Naive thymus-derived CD8-positive, alpha-beta T cell (primary cell): ENCODE measurements at regions of chr6 and their contacts with region 1.

Region 1: DNA sequence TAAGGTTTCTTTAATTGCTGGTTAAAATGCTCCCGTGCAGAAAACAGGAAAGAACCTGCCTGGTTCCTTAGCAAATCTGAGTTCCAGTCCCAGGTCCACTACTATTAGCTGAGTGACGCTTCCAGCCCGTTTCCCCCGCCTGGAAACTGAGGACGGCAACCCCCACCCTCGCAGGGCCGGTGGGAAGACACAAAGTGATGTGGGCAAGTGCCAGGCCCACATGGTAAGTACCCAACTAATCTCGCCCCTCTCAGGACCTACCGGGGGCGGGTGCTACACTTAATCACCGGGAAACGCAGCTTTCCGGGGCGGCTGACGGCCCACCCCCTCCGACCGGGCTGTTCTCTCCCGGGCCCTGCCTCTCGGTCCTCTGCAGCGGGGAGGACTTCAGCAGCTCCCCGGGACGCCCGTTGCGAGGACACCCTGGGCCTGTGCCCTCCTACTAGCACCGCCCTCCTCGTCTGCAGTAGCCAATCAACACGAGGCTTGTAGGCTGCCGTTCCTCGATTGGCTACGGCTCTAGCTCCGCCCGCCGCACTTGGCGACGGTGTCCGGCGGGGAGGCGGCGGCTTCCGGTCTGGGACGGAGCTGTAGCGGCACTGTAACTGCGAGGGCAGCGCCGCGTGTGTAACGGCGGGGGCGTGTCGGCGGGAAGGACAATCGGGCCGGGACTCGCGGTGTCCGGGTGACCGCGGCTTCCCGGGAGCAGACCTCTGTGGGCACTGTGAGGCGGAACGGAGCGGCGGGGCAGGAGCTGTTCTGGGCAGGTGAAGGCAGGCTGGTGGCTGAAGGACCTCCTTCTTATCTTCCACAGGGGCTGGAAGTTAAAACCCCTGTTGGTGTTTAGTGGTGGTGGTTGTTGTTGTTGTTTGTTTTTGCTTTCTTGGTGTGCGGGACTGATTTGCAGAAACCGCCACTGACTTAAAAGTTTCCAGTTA is at the start of gene ZBTB9:
- DNase-seq: peak; percentile 87 to 96 (median 92)
- ATAC-seq: peak; percentile 97 to 99
- H3K4me3 Mint-ChIP-seq: peak within 1 kb of the TSS; percentile 91 to 100 (median 94)
- H3K27ac Mint-ChIP-seq: peak within 1 kb of the TSS; percentile 63 to 99 (median 96)
- H3K4me1 Mint-ChIP-seq: peaks cover 31 to 69% (median 43%) of the 10 kb centered on the region in 4 donors
- H3K27me3 Mint-ChIP-seq: no peaks in the 10 kb centered on the region
- polyA plus RNA-seq, gene ZBTB9: 3.7 to 10.4 (median 6.4) TPM

Region 2: DNA sequence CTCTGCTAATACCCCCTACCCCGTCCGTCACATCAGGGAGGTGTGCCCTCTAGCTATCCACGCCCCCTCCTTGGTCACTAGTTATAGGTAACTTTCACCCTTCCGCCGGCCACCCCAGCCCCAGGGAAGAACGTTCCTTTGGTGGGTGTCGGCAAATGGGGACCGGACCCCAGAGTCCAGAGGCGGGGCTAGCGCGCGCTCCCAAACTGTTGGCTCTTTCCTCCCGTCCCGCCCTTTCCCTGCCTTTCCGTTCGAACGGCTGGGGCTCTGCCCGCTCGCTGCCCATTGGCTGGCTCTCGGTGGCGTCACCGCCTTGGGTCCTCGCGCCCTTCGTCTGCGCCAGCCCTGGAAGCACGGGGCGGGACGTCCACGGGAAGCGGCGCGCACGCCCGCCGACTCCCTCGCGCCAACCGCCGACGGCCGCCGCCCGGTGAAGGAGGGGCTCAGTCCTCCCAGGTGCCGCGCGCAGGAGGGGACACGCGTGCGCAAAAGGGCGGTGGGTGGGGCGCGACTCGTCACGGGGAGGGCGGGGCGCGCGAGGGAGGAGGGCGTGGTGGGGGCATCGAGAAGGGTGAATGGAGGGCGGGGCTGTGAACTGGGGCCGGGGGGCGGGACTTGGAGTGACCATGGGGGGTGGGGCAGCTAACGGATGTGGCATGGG is 44.1 kb before region 1 on chr6:
- POLR2A ChIA-PET with region 1: interaction called, 10 read pairs
- DNase-seq: peak; percentile 94 to 99 (median 96)
- ATAC-seq: peak; percentile 72 to 83
- H3K4me3 Mint-ChIP-seq: peak overlapping the region; percentile 74 to 96 (median 90)
- H3K27ac Mint-ChIP-seq: peak overlapping the region; percentile 63 to 99 (median 98)
- H3K4me1 Mint-ChIP-seq: peaks cover 20 to 53% (median 44%) of the 10 kb centered on the region in 4 donors
- H3K27me3 Mint-ChIP-seq: no peaks in the 10 kb centered on the region

Region 3: GRCh38 chr6:33417903-33418689 is 36.2 kb before region 1 on chr6 and contains the start of gene CUTA:
- POLR2A ChIA-PET with region 1: interaction called, 21 read pairs
- DNase-seq: peak; percentile 93 to 100 (median 99)
- ATAC-seq: peak; percentile 90
- H3K4me3 Mint-ChIP-seq: peak within 1 kb of the TSS; percentile 90 to 95 (median 92)
- H3K27ac Mint-ChIP-seq: peak within 1 kb of the TSS; percentile 98 to 100 (median 99)
- H3K4me1 Mint-ChIP-seq: peaks cover 49 to 94% (median 80%) of the 10 kb centered on the region in 4 donors
- H3K27me3 Mint-ChIP-seq: no peaks in the 10 kb centered on the region
- polyA plus RNA-seq, gene CUTA: 338 to 441 (median 385) TPM

Region 4: GRCh38 chr6:33425668-33426577 is 28.4 kb before region 1 on chr6:
- POLR2A ChIA-PET with region 1: interaction called, 52 read pairs
- DNase-seq: peak; percentile 70 to 94 (median 80)
- ATAC-seq: peak; percentile 54 to 57
- H3K4me3 Mint-ChIP-seq: peak overlapping the region; percentile 87 to 97 (median 91)
- H3K27ac Mint-ChIP-seq: peak overlapping the region; percentile 93 to 99 (median 99)
- H3K4me1 Mint-ChIP-seq: peaks cover 61 to 90% (median 79%) of the 10 kb centered on the region in 4 donors
- H3K27me3 Mint-ChIP-seq: no peaks in the 10 kb centered on the region

Region 5: GRCh38 chr6:33570806-33571636 is 116.7 kb after region 1 on chr6:
- POLR2A ChIA-PET with region 1: interaction called, 17 read pairs
- DNase-seq: peak; percentile 82 to 97 (median 96)
- ATAC-seq: peak; percentile 89 to 91
- H3K4me3 Mint-ChIP-seq: peak overlapping the region; percentile 84 to 97 (median 96)
- H3K27ac Mint-ChIP-seq: peak overlapping the region; percentile 99 to 100 (median 100)
- H3K4me1 Mint-ChIP-seq: peaks cover 16 to 35% (median 29%) of the 10 kb centered on the region in 4 donors
- H3K27me3 Mint-ChIP-seq: no peaks in the 10 kb centered on the region

Region 6: DNA sequence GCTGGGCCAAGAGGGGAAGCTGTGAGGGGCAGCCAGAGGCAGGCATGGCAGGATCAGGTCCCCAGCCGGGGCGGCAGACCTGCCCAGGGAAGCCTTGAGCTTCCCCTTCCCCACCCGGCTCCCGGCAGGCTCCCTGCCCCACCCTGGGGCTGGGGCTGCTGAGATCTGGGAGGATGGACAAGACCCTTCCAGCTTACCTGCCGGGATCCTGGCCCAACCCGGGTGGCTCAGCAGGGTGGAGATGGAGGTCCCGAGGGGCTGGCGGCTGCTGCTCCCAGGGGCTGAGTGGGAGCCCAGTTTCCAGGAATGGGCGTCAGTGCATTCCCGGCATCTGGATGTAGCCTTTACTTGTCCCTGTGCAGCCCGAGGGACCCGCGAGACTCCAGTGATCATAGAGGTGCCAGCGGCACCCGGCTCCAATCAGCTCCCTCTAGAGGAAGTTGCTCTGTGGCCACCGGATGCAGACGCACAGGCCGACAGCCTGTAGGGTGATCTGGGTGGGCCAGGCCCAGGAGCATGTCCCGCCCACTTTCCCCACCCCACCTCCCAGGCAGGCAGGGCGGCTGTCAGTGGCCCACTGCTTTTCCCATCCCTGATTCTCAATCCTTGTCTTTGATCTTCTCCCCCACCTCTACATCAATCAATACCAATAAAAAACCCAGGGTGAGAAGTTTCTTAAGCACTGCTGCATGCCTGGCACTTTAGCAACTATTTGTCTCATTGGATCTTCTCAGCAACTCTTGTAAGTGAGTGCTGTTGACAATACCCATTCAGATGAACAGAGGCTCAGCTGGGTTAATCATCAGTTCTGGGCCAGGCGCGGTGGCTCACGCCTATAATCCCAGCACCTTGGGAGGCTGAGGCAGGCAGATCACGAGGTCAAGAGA is 125.8 kb after region 1 on chr6 and contains the start of gene BAK1:
- POLR2A ChIA-PET with region 1: interaction called, 13 read pairs
- DNase-seq: peak; percentile 73 to 92 (median 80)
- ATAC-seq: peak; percentile 96 to 98
- H3K4me3 Mint-ChIP-seq: peak within 1 kb of the TSS; percentile 90 to 97 (median 94)
- H3K27ac Mint-ChIP-seq: peak within 1 kb of the TSS; percentile 94 to 99 (median 98)
- H3K4me1 Mint-ChIP-seq: peaks cover 16 to 43% (median 40%) of the 10 kb centered on the region in 4 donors
- H3K27me3 Mint-ChIP-seq: no peaks in the 10 kb centered on the region
- polyA plus RNA-seq, gene BAK1: 11.8 to 20.9 (median 13.2) TPM